Calu3 (cell line): ENCODE measurements at regions of chr5 and their contacts with region 1.

Region 1: DNA sequence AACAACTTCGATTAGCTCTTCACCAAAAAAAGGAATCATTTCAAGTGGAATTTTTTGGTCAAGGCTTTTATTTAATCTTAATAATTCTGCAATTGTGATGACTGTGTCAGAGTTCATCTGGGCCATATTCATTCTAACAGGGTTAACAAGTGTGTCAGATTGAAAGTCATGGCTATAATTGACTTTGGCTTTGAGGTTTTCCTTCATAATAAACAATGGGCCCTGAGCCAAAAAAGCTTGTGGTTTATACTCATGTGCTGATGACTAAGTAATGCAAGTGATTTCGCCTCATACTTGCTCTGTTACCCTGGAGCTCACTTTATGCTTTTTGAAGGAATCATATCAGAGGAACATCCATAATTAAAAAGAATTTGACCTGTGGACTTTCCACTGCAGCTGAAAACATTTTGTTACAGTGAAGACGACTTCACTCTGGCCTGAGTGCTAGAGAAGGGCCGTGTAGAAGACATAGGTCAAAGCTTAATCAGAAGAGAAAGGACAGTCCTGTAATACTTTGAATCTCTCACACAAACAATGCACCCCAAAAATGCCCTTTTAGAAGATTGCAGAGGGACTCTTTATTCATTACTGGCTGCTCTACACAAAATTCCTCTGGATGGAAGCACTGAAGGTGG is 101.7 kb downstream of the GDNF start:
- DNase-seq: peak; percentile 36
- H3K4me3 Mint-ChIP-seq: no peak overlapping the region
- H3K27ac Mint-ChIP-seq: no peak overlapping the region
- H3K4me1 Mint-ChIP-seq: peaks cover 11% of the 10 kb centered on the region
- H3K27me3 Mint-ChIP-seq: no peaks in the 10 kb centered on the region
- CTCF ChIP-seq: no peak

Region 2: DNA sequence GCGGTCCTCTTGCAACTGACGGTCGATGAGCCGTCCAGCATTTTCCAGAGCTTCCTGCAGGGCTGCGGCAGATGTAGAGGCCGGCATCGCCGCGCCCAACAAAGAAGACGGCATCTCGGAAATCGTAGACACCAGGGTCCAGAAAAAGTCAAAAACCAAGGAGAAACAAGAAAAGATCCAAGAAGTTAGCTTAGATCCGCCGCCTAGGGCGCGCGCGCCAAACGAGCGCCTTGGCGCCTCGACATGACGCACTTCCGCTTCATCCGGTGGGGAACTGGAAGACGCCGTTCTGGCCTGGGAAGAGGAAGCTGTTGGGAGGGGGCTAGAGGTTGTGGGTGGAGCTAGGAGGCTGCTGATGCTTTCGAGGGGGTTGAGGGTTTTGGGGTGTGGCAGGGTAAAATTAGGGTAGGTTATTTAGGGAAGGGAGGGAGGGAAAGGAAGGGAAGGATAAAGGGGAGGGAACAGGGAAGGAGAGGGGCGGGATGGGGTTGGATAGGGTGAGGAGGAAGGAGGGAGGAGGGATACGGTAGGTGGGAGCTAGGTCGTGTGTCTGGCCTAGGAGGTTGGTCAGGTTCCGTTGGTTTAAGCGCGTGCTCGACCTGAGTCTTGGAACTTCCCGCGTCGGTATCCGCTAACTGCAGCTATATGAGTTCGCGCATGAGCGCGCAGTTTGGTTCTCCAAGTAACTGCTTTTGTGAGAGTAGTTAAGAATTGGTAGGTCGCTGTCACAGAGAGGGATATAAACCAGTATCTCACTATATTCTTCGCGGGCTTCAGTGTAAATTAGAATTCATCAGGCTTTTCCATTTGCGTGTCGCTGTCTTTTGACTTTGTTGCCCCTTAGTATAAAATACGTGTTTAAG is 367.1 kb before region 1 on chr5 and contains the start of gene NUP155:
- CTCF ChIA-PET with region 1: no interaction called
- intact Hi-C with region 1: no loop called
- DNase-seq: peak; percentile 90
- H3K4me3 Mint-ChIP-seq: peak within 1 kb of the TSS; percentile 99
- H3K27ac Mint-ChIP-seq: peak within 1 kb of the TSS; percentile 98
- H3K4me1 Mint-ChIP-seq: peaks cover 21% of the 10 kb centered on the region
- H3K27me3 Mint-ChIP-seq: no peaks in the 10 kb centered on the region
- CTCF ChIP-seq: no peak
- total RNA-seq, gene NUP155: 45.4 and 47.2 TPM in 2 replicates

Region 3: DNA sequence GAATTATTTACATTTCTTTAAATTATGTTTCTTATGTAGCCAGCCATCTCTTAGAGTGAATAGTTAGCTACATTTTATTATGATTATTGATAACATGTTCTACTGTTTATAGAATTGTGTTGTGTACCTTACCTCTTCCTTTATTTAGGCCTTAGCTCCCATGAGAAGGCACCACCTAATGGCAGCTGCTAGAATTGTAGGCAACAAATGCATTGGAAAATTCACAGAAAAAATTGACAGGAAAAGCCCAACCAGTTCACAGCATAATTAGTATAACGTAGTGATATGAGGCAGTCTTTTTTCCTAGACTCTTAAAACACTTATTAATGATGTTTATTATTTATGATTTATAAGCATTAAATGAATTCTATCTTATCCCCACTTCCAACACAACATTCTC is 183.2 kb before region 1 on chr5:
- CTCF ChIA-PET with region 1: no interaction called
- intact Hi-C with region 1: loop called (anchors 10 kb)
- DNase-seq: no peak
- H3K4me3 Mint-ChIP-seq: no peak overlapping the region
- H3K27ac Mint-ChIP-seq: no peak overlapping the region
- H3K4me1 Mint-ChIP-seq: no peaks in the 10 kb centered on the region
- H3K27me3 Mint-ChIP-seq: no peaks in the 10 kb centered on the region
- CTCF ChIP-seq: peak; percentile 15

Region 4: DNA sequence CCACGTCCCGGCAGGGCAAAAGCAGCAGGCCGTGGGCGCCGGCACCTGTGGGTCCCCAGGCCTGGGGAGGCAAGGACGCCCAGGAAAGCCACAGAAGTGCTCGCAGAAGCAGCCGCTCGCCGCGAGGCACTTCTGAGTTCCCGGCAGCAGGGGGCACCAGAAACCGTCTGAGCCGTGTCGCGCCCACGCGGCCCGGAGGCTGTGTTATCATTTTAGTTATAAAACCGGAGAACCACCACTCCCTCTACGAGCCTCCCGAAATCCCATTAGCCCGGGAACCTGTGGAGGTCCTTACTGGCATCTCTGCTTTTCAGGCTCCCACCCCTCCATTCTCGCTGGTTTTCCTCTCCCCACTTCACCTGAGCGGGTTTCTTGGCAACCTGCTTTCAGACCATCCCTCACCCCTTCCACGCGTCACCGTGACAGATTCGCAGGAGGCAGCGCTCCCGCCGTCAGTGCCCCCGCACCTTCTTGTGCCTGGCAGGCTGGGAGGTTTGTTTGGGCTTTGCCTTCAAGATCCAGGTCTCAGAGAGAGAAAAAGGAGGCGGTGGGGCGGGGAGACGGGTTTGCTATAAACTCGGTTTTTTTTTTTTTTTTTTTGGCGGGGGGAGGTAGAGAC is 99.3 kb after region 1 on chr5:
- CTCF ChIA-PET with region 1: interaction called, 11 read pairs
- intact Hi-C with region 1: no loop called
- DNase-seq: peak; percentile 60
- H3K4me3 Mint-ChIP-seq: peak overlapping the region; percentile 47
- H3K27ac Mint-ChIP-seq: no peak overlapping the region
- H3K4me1 Mint-ChIP-seq: no peaks in the 10 kb centered on the region
- H3K27me3 Mint-ChIP-seq: peaks cover 78% of the 10 kb centered on the region
- CTCF ChIP-seq: peak; percentile 30

Region 5: GRCh38 chr5:37859805-37860204 is 121.6 kb after region 1 on chr5:
- CTCF ChIA-PET with region 1: no interaction called
- intact Hi-C with region 1: no loop called
- DNase-seq: no peak
- H3K4me3 Mint-ChIP-seq: no peak overlapping the region
- H3K27ac Mint-ChIP-seq: no peak overlapping the region
- H3K4me1 Mint-ChIP-seq: no peaks in the 10 kb centered on the region
- H3K27me3 Mint-ChIP-seq: peaks cover 91% of the 10 kb centered on the region
- CTCF ChIP-seq: no peak